ENCODE measurements at regions of chr3 and their contacts with region 1.

Region 1: GRCh38 chr3:192816351-192816750 is 89.0 kb upstream of the FGF12 start:
- DNase-seq: peak; percentile 29 to 67
- H3K4me3 ChIP-seq: no peak overlapping the region
- H3K27ac ChIP-seq: no peak overlapping the region
- H3K4me1 ChIP-seq: peaks cover 19% of the 10 kb centered on the region
- H3K27me3 ChIP-seq: no peaks in the 10 kb centered on the region
- CTCF ChIP-seq: peak; percentile 96

Region 2: DNA sequence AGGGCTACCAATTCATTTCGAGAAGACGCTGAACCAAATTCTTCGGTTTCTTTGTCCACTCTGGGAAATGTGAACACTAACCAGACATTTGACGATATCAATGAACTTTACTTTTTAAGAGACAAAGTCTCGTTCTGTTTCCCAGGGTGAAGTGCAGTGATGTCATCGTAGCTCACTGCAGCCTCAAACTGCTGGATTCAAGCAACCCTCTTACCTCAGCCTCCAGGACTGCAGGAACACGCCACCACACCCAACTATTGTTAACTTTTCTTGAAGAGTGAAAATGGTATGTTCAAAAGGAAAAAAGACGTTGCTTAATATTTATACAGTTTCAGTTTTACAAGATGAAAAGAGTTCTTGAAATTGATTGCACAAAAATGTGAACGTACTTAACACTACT is 70.7 kb after region 1 on chr3:
- CTCF ChIA-PET with region 1: no interaction called
- POLR2A ChIA-PET with region 1: interaction called, 4 read pairs
- intact Hi-C with region 1: loop called (anchors 2 kb)
- DNase-seq: peak in 1 of 2 experiments; percentile 62
- H3K4me3 ChIP-seq: no peak overlapping the region
- H3K27ac ChIP-seq: no peak overlapping the region
- H3K4me1 ChIP-seq: peaks cover 71% of the 10 kb centered on the region
- H3K27me3 ChIP-seq: no peaks in the 10 kb centered on the region
- CTCF ChIP-seq: no peak

Region 3: GRCh38 chr3:193040836-193041672 is 224.7 kb after region 1 on chr3:
- CTCF ChIA-PET with region 1: interaction called, 7 read pairs
- POLR2A ChIA-PET with region 1: interaction called, 5 read pairs
- intact Hi-C with region 1: loop called (anchors 1 kb)
- DNase-seq: peak in 1 of 2 experiments; percentile 58
- H3K4me3 ChIP-seq: no peak overlapping the region
- H3K27ac ChIP-seq: no peak overlapping the region
- H3K4me1 ChIP-seq: no peaks in the 10 kb centered on the region
- H3K27me3 ChIP-seq: no peaks in the 10 kb centered on the region
- CTCF ChIP-seq: peak; percentile 81

Region 4: GRCh38 chr3:193452338-193452737 is 636.0 kb after region 1 on chr3:
- CTCF ChIA-PET with region 1: no interaction called
- POLR2A ChIA-PET with region 1: no interaction called
- intact Hi-C with region 1: loop called (anchors 1 kb)
- DNase-seq: no peak
- H3K4me3 ChIP-seq: no peak overlapping the region
- H3K27ac ChIP-seq: no peak overlapping the region
- H3K4me1 ChIP-seq: no peaks in the 10 kb centered on the region
- H3K27me3 ChIP-seq: peaks cover 36% of the 10 kb centered on the region; the same call in 1 of the 2 replicates
- CTCF ChIP-seq: peak; percentile 54; the same call in 1 of the 2 replicates

Region 5: DNA sequence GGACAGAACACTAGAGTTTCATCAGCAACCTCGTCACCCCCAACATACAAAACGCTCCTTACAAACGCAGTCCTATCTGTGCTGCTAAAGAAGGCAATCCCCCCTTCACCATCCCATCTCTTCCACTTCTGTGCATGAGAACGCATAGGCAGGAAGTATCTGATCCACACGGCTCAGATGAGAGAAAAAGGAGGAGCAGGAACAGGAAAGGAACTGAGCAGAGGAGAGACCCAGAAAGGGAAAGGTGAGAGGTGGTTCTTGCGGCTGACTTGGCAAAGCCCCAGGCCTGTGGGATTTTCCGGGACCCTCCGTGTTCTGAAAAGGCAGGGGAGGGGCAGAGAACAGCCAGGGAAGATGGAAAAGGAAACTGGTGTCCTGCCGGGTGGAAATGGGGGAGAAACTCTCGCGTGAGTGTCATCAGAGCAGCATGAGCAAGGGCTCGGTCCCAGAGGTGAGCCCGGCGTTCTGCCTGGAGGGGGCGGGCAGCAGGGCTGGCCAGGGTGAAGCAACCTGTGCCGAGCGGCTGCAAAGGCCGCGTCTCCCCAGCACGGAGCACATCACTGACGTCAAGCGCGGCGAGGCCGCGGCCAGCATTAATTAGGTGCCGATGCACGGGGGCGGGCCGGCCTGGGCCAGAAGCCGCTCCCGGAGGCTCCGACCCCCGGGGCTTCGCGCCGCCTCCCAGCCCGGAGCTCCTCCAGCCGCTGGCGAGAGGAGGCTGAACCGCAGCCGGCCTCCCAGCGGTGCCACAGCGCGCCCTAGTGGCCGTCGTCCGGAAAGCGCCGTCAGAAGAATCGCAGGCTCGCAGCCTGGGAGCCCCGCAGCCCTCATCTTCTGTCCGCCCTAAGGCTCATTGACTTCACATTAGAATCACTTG is 1499.0 kb after region 1 on chr3:
- CTCF ChIA-PET with region 1: no interaction called
- POLR2A ChIA-PET with region 1: interaction called, 17 read pairs
- intact Hi-C with region 1: no loop called
- DNase-seq: peak; percentile 91 to 97
- H3K4me3 ChIP-seq: peak overlapping the region; percentile 51
- H3K27ac ChIP-seq: peak overlapping the region; percentile 75
- H3K4me1 ChIP-seq: peaks cover 27% of the 10 kb centered on the region
- H3K27me3 ChIP-seq: no peaks in the 10 kb centered on the region
- CTCF ChIP-seq: peak; percentile 99